ENCODE measurements at regions of chr3 and their contacts with region 1.

Region 1: DNA sequence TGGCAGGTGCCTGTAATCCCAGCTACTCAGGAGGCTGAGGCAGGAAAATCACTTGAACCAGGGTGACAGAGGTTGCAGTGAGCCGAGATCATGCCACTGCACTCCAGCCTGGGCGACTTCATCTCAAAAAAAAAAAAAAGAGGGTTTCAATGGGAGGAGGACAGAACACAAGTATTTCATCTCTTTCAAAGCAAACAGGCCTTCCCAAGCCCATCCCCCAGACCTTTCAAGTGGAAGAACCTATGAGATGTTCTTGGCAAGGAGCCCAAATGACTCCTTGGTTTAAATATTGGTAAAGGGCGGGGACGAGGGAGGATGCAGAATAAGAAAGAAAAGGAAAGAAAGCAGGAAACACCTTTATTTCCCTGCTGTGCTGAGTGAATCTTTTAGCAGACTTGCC is 62.3 kb upstream of the MCF2L2 start:
- DNase-seq: no peak
- CTCF ChIP-seq: no peak

Region 2: DNA sequence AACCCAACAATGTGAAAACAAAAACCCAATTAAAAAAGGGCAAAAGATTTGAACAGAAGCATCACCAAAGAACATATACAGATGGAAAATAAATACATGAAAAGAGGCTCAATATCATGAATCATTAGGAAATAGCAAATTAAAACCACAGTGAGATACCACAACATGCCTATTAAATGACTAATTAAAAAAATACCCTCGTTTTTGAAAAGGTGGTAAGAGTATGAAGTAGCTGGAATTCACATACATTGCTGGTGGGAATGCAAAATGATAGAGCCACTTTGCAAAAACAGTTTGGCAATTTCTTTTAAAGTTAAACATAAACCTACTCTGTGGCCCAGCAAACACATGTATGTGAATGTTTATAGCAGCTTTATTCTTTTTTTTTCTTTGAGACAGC is 161.8 kb before region 1 on chr3:
- CTCF ChIA-PET with region 1: no interaction called
- POLR2A ChIA-PET with region 1: no interaction called
- DNase-seq: no peak
- CTCF ChIP-seq: no peak

Region 3: GRCh38 chr3:183410280-183410679 is 80.4 kb before region 1 on chr3:
- CTCF ChIA-PET with region 1: no interaction called
- POLR2A ChIA-PET with region 1: no interaction called
- DNase-seq: no peak
- CTCF ChIP-seq: no peak

Region 4: DNA sequence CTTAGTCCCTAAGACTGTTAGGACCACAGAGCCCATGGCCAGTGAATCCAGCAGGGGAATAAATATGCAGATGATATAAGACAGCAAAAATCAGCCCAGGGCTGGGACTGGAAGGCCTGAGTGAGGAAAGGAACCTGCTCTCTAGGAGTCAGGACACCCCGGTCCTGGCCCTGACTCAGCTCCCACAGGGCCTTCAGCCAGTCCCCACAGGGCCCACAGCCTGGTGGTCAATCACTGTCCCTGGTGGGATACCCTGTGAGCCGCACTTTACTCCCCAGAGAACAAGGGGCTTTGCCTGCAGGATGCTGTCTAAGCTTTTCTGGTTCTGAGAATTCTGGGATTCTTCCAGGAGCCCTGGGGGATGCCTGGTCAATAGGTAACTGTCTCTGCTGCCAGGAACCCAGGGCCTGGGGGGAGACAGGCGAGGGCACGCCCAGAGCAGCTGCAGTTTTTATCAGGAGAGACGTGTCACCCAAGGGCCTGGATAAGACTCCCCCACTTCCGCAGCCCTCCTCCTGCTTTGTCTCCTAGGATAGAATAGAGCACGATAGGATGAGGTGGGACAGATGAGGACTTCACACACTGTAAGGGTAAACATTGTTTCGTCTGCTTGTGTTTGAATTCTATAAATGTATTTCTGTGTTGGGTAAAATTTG is 12.7 kb before region 1 on chr3:
- CTCF ChIA-PET with region 1: interaction called, 29 read pairs
- POLR2A ChIA-PET with region 1: no interaction called
- DNase-seq: no peak
- CTCF ChIP-seq: no peak

Region 5: GRCh38 chr3:183991403-183991802 is 500.7 kb after region 1 on chr3:
- CTCF ChIA-PET with region 1: no interaction called
- POLR2A ChIA-PET with region 1: no interaction called
- DNase-seq: no peak
- CTCF ChIP-seq: no peak

Measured in GM10248 (cell line).